T-cell (primary cell): ENCODE measurements at regions of chr7 and their contacts with region 1.

Region 1: GRCh38 chr7:37352974-37353948 is 95.4 kb downstream of the ELMO1 start:
- DNase-seq: peak; percentile 45 to 86 (median 75)
- ATAC-seq: peak; percentile 85 to 89 (median 86)
- H3K4me3 ChIP-seq: peak overlapping the region; percentile 57 to 83
- H3K4me3 Mint-ChIP-seq: peak overlapping the region; percentile 94 to 97 (median 96)
- H3K27ac ChIP-seq: peak overlapping the region; percentile 65
- H3K27ac Mint-ChIP-seq: peak overlapping the region; percentile 86 to 90
- H3K4me1 ChIP-seq: peaks cover 34 to 40% of the 10 kb centered on the region in 2 experiments
- H3K4me1 Mint-ChIP-seq: peaks cover 91 to 99% (median 92%) of the 10 kb centered on the region in 3 donors
- H3K27me3 ChIP-seq: no peaks in the 10 kb centered on the region
- H3K27me3 Mint-ChIP-seq: no peaks in the 10 kb centered on the region

Region 2: GRCh38 chr7:37234928-37235327 is 118.3 kb before region 1 on chr7:
- CTCF ChIA-PET with region 1: interaction called, 4 to 30 read pairs
- POLR2A ChIA-PET with region 1: interaction called in 1 of 2 experiments, 4 read pairs
- DNase-seq: peak in 16 of 35 experiments; percentile 3 to 55 (median 14)
- ATAC-seq: peak in 1 of 4 experiments; percentile 51
- H3K4me3 ChIP-seq: no peak overlapping the region
- H3K4me3 Mint-ChIP-seq: no peak overlapping the region
- H3K27ac ChIP-seq: no peak overlapping the region
- H3K27ac Mint-ChIP-seq: no peak overlapping the region
- H3K4me1 ChIP-seq: peaks cover 0 to 3% of the 10 kb centered on the region in 2 experiments
- H3K4me1 Mint-ChIP-seq: peaks cover 6 to 21% (median 17%) of the 10 kb centered on the region in 3 donors
- H3K27me3 ChIP-seq: no peaks in the 10 kb centered on the region
- H3K27me3 Mint-ChIP-seq: no peaks in the 10 kb centered on the region

Region 3: DNA sequence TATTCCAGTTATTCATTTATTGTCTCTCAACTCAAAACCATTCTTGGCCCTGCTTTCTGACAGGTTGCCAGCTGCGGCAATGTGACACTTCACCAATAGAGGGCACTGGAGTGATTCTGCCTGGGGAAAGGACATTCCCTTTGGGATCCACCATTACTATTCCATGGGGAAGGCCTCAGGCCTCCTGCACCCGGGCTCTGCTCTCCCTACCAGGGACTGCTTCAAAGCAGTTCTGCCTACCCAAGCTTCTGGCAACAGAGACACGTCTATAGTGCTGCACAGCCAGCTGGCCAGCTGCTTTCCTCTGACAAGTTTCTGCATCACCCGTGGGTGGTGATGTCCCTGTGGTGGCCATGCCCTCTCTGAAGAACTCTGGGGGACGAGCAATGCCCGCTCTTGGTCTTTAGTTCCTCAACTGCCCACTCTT is 68.4 kb before region 1 on chr7:
- CTCF ChIA-PET with region 1: interaction called, 6 to 12 read pairs
- POLR2A ChIA-PET with region 1: interaction called in 1 of 2 experiments, 6 read pairs
- DNase-seq: peak in 25 of 35 experiments; percentile 3 to 57 (median 20)
- ATAC-seq: peak in 3 of 4 experiments; percentile 26 to 47 (median 43)
- H3K4me3 ChIP-seq: no peak overlapping the region
- H3K4me3 Mint-ChIP-seq: no peak overlapping the region
- H3K27ac ChIP-seq: no peak overlapping the region
- H3K27ac Mint-ChIP-seq: peak overlapping the region in 1 of 2 donors; percentile 44
- H3K4me1 ChIP-seq: peaks cover 9 to 15% of the 10 kb centered on the region in 2 experiments
- H3K4me1 Mint-ChIP-seq: peaks cover 53 to 62% (median 54%) of the 10 kb centered on the region in 3 donors
- H3K27me3 ChIP-seq: no peaks in the 10 kb centered on the region
- H3K27me3 Mint-ChIP-seq: no peaks in the 10 kb centered on the region

Region 4: GRCh38 chr7:37311355-37311754 is 41.9 kb before region 1 on chr7:
- CTCF ChIA-PET with region 1: interaction called in 1 of 2 experiments, 10 read pairs
- POLR2A ChIA-PET with region 1: interaction called in 1 of 2 experiments, 4 read pairs
- DNase-seq: peak in 7 of 35 experiments; percentile 2 to 52 (median 11)
- ATAC-seq: peak in 3 of 4 experiments; percentile 35 to 48 (median 38)
- H3K4me3 ChIP-seq: no peak overlapping the region
- H3K4me3 Mint-ChIP-seq: peak overlapping the region; percentile 2 to 62 (median 31)
- H3K27ac ChIP-seq: peak overlapping the region; percentile 85
- H3K27ac Mint-ChIP-seq: peak overlapping the region; percentile 90 to 92
- H3K4me1 ChIP-seq: peaks cover 32 to 34% of the 10 kb centered on the region in 2 experiments
- H3K4me1 Mint-ChIP-seq: peaks cover 71 to 84% (median 79%) of the 10 kb centered on the region in 3 donors
- H3K27me3 ChIP-seq: no peaks in the 10 kb centered on the region
- H3K27me3 Mint-ChIP-seq: no peaks in the 10 kb centered on the region

Region 5: DNA sequence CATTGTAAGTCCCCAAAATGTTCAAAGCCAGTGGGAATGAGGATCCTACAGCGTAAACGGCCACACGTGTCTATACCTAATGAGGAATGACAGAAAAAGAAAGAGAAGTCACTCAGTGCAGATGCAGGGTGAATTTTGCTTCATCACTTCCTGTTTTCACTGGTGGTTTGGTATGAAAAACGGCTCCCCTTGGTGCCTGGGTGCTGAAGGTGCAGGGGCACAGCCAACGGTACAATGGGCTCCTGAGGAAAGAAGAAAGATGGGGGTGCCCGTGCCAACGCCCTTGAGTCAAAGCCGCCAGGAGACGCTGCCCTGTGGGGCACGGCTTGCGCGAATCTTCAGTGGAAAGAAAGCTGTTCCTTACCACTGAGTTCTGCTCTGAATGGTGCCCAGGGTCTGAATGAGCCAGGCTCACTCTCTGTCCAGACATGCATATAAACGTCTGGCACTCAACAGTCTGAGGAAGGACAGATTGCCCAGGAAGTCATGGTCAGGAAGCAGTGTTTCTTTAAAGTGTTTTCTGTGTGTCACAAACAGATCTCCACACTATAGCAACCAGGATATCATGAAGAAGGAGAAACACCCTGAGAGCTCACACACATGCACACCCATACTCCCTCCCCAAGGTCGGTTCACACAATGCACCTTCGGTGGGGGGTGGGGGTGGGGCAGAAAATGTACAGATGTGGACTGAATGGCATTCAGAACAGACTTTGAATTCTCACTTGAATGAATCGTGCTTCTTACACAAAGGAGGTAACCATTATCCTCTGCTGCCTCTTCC is 10.4 kb before region 1 on chr7:
- CTCF ChIA-PET with region 1: interaction called, 5 to 26 read pairs
- POLR2A ChIA-PET with region 1: interaction called in 1 of 2 experiments, 12 read pairs
- DNase-seq: peak; percentile 60 to 83 (median 72)
- ATAC-seq: peak; percentile 88 to 90 (median 90)
- H3K4me3 ChIP-seq: peak overlapping the region; percentile 54 to 77
- H3K4me3 Mint-ChIP-seq: peak overlapping the region; percentile 90 to 96 (median 92)
- H3K27ac ChIP-seq: peak overlapping the region; percentile 75
- H3K27ac Mint-ChIP-seq: peak overlapping the region; percentile 96 to 98
- H3K4me1 ChIP-seq: peaks cover 30 to 34% of the 10 kb centered on the region in 2 experiments
- H3K4me1 Mint-ChIP-seq: peaks cover 72 to 82% (median 79%) of the 10 kb centered on the region in 3 donors
- H3K27me3 ChIP-seq: no peaks in the 10 kb centered on the region
- H3K27me3 Mint-ChIP-seq: no peaks in the 10 kb centered on the region

Region 6: DNA sequence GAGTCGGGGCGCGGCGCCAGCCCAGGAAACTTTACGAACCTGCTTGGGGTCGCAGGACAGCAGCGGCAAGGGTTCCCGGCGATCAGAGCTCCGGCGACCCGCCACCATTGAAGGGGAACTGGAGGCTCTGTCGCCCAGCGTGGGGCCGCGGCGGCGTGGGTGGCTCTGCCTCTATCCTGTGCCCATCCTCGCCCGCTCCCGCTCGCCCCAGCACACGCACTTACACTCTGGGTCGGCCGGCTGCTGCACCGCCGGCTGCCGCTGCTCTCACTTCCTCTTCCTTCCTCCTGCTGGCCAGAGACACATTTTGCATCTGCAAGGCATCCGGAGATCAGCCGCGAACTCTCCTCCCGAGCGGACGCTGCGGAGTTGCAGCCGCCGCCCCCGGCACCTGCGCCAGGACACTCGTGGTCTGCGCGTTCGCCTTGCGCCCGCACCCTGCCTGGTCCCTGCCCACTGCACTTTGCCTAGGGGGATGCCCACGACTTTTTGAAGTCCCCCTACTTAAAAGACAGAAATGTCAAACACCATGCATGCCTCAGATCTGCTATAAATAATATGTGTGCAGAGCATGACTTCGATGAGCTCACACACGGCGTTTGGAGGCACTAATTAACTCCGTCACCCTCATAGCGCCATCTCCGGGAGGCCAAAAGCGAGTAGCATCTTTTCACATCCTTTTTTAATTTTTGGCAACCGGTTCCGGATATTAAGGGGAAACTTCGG is 95.5 kb after region 1 on chr7 and contains the start of gene ELMO1:
- CTCF ChIA-PET with region 1: interaction called in 1 of 2 experiments, 28 read pairs
- POLR2A ChIA-PET with region 1: interaction called, 8 read pairs
- DNase-seq: peak; percentile 65 to 89 (median 76)
- ATAC-seq: peak; percentile 82 to 88 (median 84)
- H3K4me3 ChIP-seq: peak within 1 kb of the TSS; percentile 83 to 96
- H3K4me3 Mint-ChIP-seq: peak within 1 kb of the TSS; percentile 93 to 94 (median 93)
- H3K27ac ChIP-seq: peak within 1 kb of the TSS; percentile 90
- H3K27ac Mint-ChIP-seq: peak within 1 kb of the TSS; percentile 97 to 98
- H3K4me1 ChIP-seq: peaks cover 25 to 34% of the 10 kb centered on the region in 2 experiments
- H3K4me1 Mint-ChIP-seq: peaks cover 51 to 64% (median 55%) of the 10 kb centered on the region in 3 donors
- H3K27me3 ChIP-seq: no peaks in the 10 kb centered on the region
- H3K27me3 Mint-ChIP-seq: peaks cover 0 to 1% of the 10 kb centered on the region in 2 donors
- total RNA-seq, gene ELMO1: 101 to 149 (median 113) TPM

Region 7: DNA sequence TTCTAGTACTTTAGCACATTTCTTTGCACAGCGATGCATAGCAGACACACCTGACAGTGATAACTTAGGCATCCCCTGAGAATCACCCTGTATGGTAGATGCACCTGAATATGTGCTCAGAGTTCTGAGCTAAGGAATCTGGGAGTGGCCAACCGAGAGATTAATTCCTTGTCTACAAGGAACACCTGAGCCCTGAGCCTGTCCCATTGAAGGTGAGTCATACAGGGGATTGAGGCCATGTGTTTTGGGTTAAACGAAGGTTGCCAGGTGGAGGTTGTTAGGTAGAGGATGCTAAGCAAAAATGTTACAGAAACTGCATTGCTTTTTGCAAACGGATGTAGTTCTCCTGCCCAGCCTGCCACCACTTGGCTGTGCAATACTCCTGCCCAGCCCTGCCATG is 1149.0 kb after region 1 on chr7:
- CTCF ChIA-PET with region 1: no interaction called
- POLR2A ChIA-PET with region 1: no interaction called
- DNase-seq: no peak
- ATAC-seq: no peak
- H3K4me3 ChIP-seq: no peak overlapping the region
- H3K4me3 Mint-ChIP-seq: no peak overlapping the region
- H3K27ac ChIP-seq: no peak overlapping the region
- H3K27ac Mint-ChIP-seq: no peak overlapping the region
- H3K4me1 ChIP-seq: no peaks in the 10 kb centered on the region
- H3K4me1 Mint-ChIP-seq: no peaks in the 10 kb centered on the region
- H3K27me3 ChIP-seq: peaks cover 0 to 7% of the 10 kb centered on the region in 2 experiments
- H3K27me3 Mint-ChIP-seq: peaks cover 0 to 8% of the 10 kb centered on the region in 2 donors